CD14-positive monocyte (primary cell): ENCODE measurements at regions of chr5 and their contacts with region 1.

Region 1: GRCh38 chr5:154647114-154647760 is 107.9 kb upstream of the LARP1 start:
- DNase-seq: no peak
- H3K4me3 ChIP-seq: peak overlapping the region; percentile 38 to 82 (median 54)
- H3K4me3 Mint-ChIP-seq: peak overlapping the region; percentile 94 to 100
- H3K27ac ChIP-seq: no peak overlapping the region
- H3K27ac Mint-ChIP-seq: peak overlapping the region in 5 of 7 donors; percentile 5 to 91 (median 67)
- H3K4me1 ChIP-seq: peaks cover 18 to 21% of the 10 kb centered on the region in 2 donors
- H3K4me1 Mint-ChIP-seq: peaks cover 23% of the 10 kb centered on the region
- H3K27me3 ChIP-seq: peaks cover 0 to 15% of the 10 kb centered on the region in 2 donors
- H3K27me3 Mint-ChIP-seq: peaks cover 17 to 28% (median 28%) of the 10 kb centered on the region in 3 donors
- CTCF ChIP-seq: no peak

Region 2: DNA sequence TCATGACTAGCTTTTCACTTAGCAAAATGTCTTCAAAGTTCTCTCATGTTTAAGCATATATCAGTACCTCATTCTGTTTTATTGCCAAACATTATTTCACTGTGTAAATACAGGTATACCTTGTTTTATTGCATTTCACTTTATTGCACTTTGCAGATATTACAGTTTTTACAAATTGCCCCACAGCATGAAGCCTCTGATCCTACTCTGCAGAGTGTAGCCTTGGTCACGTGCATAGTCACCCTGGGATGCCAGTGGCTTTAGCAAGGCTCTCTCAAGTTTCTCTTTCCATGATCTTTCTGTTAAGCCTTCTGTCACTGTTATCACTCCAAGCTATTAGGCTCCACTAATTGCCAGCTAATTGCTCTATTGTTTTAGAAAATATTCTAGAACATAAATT is 1339.0 kb before region 1 on chr5:
- intact Hi-C with region 1: no loop called
- DNase-seq: no peak
- H3K4me3 ChIP-seq: no peak overlapping the region
- H3K4me3 Mint-ChIP-seq: no peak overlapping the region
- H3K27ac ChIP-seq: no peak overlapping the region
- H3K27ac Mint-ChIP-seq: no peak overlapping the region
- H3K4me1 ChIP-seq: no peaks in the 10 kb centered on the region
- H3K4me1 Mint-ChIP-seq: no peaks in the 10 kb centered on the region
- H3K27me3 ChIP-seq: no peaks in the 10 kb centered on the region
- H3K27me3 Mint-ChIP-seq: no peaks in the 10 kb centered on the region
- CTCF ChIP-seq: no peak

Region 3: GRCh38 chr5:154467655-154468354 is 179.4 kb before region 1 on chr5:
- intact Hi-C with region 1: loop called in 1 of 2 experiments (anchors 10 kb)
- DNase-seq: peak; percentile 52 to 63 (median 63)
- H3K4me3 ChIP-seq: no peak overlapping the region
- H3K4me3 Mint-ChIP-seq: peak overlapping the region in 1 of 2 donors; percentile 11
- H3K27ac ChIP-seq: no peak overlapping the region
- H3K27ac Mint-ChIP-seq: no peak overlapping the region
- H3K4me1 ChIP-seq: peaks cover 3 to 16% of the 10 kb centered on the region in 2 donors
- H3K4me1 Mint-ChIP-seq: peaks cover 17% of the 10 kb centered on the region
- H3K27me3 ChIP-seq: peaks cover 33 to 42% of the 10 kb centered on the region in 2 donors
- H3K27me3 Mint-ChIP-seq: peaks cover 38 to 51% (median 51%) of the 10 kb centered on the region in 3 donors
- CTCF ChIP-seq: peak; percentile 96

Region 4: DNA sequence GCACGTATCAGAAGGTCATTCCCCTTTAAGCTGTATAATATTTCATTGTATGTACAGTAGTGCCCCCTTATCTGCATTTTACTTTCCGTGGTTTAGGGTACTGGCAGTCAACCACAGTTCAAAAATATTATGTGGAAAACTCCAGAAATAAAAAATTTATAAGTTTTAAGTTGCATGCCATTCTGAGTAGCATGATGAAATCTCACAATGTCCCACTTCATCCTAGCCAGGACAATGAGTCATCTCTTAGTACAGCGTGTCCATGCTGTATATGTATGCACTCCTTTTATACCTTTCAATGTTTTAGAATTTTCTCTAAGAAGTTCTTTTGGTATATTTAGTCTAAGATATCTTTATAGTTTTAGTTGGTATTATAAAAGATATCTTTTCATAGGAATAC is 54.2 kb before region 1 on chr5:
- intact Hi-C with region 1: no loop called
- DNase-seq: no peak
- H3K4me3 ChIP-seq: no peak overlapping the region
- H3K4me3 Mint-ChIP-seq: no peak overlapping the region
- H3K27ac ChIP-seq: no peak overlapping the region
- H3K27ac Mint-ChIP-seq: no peak overlapping the region
- H3K4me1 ChIP-seq: no peaks in the 10 kb centered on the region
- H3K4me1 Mint-ChIP-seq: no peaks in the 10 kb centered on the region
- H3K27me3 ChIP-seq: no peaks in the 10 kb centered on the region
- H3K27me3 Mint-ChIP-seq: peaks cover 9 to 17% (median 10%) of the 10 kb centered on the region in 3 donors
- CTCF ChIP-seq: no peak

Region 5: DNA sequence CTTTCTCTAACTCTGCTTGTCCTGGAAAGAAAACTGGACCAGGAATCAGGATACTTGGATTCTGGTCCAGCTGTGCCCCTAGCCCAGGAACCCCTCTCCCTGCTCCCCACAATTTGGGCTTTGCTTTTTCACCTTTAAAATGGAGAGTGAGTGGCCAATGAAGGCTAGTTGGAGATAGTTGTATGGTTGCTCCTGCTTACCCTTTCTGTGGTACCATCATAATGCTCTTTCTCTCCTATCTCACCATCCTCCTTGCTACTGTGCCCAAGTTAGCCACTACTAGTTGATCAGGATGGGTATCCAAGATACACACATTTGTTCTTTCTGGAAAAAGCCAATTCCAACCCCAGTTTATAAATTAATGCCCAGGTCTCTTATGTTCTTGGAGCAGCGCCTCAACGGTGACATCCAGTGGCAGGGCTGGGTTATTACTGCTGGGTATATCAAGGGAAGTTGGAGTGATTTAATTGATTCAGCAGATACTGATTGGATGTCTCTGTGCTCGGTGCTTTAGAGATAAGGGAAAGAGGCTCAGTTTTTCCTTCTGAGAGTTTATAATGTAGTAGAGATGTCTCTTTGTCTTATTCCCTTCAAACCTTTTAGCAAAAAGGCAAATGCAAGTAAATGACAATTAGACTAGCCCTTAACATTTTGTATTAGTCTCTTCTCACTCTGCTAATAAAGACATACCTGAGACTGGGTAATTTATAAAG is 164.6 kb after region 1 on chr5:
- intact Hi-C with region 1: loop called (anchors 2 to 5 kb)
- DNase-seq: peak; percentile 48 to 60 (median 59)
- H3K4me3 ChIP-seq: no peak overlapping the region
- H3K4me3 Mint-ChIP-seq: peak overlapping the region in 1 of 2 donors; percentile 16
- H3K27ac ChIP-seq: peak overlapping the region in 1 of 2 donors; percentile 48
- H3K27ac Mint-ChIP-seq: peak overlapping the region; percentile 43 to 80 (median 72)
- H3K4me1 ChIP-seq: peaks cover 11 to 18% of the 10 kb centered on the region in 2 donors
- H3K4me1 Mint-ChIP-seq: peaks cover 19% of the 10 kb centered on the region
- H3K27me3 ChIP-seq: no peaks in the 10 kb centered on the region
- H3K27me3 Mint-ChIP-seq: no peaks in the 10 kb centered on the region
- CTCF ChIP-seq: peak; percentile 92